Aorta (tissue), 5 donors: ENCODE measurements at regions of chr18 and their contacts with region 1.

Region 1: GRCh38 chr18:46250084-46250811 is 146.1 kb downstream of the HAUS1 start:
- DNase-seq: no peak
- ATAC-seq: peak; percentile 44
- H3K4me3 ChIP-seq: no peak overlapping the region
- H3K27ac ChIP-seq: no peak overlapping the region
- H3K4me1 ChIP-seq: peaks cover 3 to 10% of the 10 kb centered on the region in 2 donors
- H3K27me3 ChIP-seq: no peaks in the 10 kb centered on the region

Region 2: GRCh38 chr18:46408334-46408987 is 158.2 kb after region 1 on chr18:
- intact Hi-C with region 1: loop called in 1 of 2 experiments (anchors 10 kb)
- DNase-seq: peak in 1 of 2 donors; percentile 43
- ATAC-seq: no peak
- H3K4me3 ChIP-seq: no peak overlapping the region
- H3K27ac ChIP-seq: no peak overlapping the region
- H3K4me1 ChIP-seq: peaks cover 0 to 2% of the 10 kb centered on the region in 2 donors
- H3K27me3 ChIP-seq: no peaks in the 10 kb centered on the region

Region 3: DNA sequence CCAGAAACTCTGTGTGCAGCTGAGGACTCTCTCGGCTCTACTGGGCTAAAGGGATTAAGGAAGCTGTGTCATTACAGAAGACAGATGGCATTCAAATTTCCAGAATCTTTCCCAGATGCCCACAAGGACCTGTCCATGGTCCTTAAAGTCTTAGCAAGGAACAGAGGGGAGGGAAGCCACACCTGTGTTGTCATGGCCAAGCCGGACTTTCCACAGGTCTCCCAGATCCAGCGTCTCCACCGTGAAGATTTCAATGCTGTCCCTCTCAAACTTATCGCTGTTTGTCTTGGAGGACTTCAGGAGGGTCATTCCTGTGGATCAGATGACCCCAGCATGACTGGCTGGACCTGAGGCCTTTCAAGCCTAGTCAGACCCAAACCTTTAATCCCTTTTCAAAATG is 292.3 kb after region 1 on chr18:
- intact Hi-C with region 1: no loop called
- DNase-seq: no peak
- ATAC-seq: no peak
- H3K4me3 ChIP-seq: no peak overlapping the region
- H3K27ac ChIP-seq: no peak overlapping the region
- H3K4me1 ChIP-seq: no peaks in the 10 kb centered on the region
- H3K27me3 ChIP-seq: no peaks in the 10 kb centered on the region